ENCODE measurements at regions of chr21 and their contacts with region 1.

Region 1: DNA sequence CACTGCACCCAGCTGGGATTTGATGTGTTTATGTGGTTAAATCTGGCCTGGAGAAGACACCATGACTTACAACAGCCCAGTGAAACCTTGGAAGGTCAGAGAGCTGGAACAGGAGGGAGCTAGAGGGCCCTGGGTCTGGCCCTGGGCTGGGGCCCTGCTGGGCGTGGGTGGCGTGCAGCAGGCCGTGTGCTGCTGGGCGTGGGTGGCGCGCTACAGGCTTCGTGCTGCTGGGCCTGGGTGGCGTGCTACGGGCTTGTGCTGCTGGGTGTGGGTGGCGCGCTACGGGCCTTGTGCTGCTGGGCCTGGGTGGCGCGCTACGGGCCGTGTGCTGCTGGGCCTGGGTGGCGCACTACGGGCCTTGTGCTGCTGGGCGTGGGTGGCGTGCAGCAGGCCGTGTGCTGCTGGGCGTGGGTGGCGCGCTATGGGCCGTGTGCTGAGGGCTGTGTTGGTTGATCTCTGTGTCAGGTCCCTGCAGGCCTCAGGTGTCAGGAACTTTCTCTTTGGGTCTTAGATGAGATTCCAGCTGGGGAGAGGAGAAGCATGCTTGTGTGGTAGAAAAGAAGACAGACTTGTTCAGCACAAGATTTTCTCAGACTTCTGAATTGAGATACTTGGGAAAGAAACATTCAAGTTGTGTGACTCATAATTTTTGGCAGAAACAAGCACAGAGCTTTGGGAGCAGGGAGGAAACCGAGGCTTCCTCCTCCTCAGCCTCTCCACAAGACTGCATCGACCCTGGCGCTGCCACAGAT is 66.0 kb downstream of the COL18A1 start:
- DNase-seq: no peak
- ATAC-seq: no peak
- H3K4me3 ChIP-seq: peak overlapping the region in 2 of 3 experiments; percentile 34 to 63; a peak in 4 of 6 replicates
- H3K27ac ChIP-seq: peak overlapping the region; percentile 99
- H3K4me1 ChIP-seq: peaks cover 75% of the 10 kb centered on the region
- H3K27me3 ChIP-seq: no peaks in the 10 kb centered on the region
- CTCF ChIP-seq: no peak
- EP300 ChIP-seq: no peak
- POLR2A ChIP-seq: no peak
- RAD21 ChIP-seq: no peak

Region 2: GRCh38 chr21:45309069-45309986 is 161.6 kb before region 1 on chr21:
- CTCF ChIA-PET with region 1: no interaction called
- POLR2A ChIA-PET with region 1: interaction called, 18 read pairs
- in situ Hi-C with region 1: no loop called
- intact Hi-C with region 1: no loop called
- DNase-seq: peak; percentile 69
- ATAC-seq: peak; percentile 76
- H3K4me3 ChIP-seq: peak overlapping the region; percentile 60 to 78 (median 61)
- H3K27ac ChIP-seq: peak overlapping the region; percentile 91
- H3K4me1 ChIP-seq: peaks cover 39% of the 10 kb centered on the region
- H3K27me3 ChIP-seq: no peaks in the 10 kb centered on the region
- CTCF ChIP-seq: peak; percentile 75
- EP300 ChIP-seq: no peak
- POLR2A ChIP-seq: no peak
- RAD21 ChIP-seq: peak; percentile 76

Region 3: GRCh38 chr21:45404730-45405270 is 66.1 kb before region 1 on chr21 and contains the start of gene COL18A1:
- CTCF ChIA-PET with region 1: no interaction called
- POLR2A ChIA-PET with region 1: interaction called, 38 read pairs
- in situ Hi-C with region 1: no loop called
- intact Hi-C with region 1: no loop called
- DNase-seq: no peak
- ATAC-seq: peak; percentile 16
- H3K4me3 ChIP-seq: peak within 1 kb of the TSS; percentile 78 to 79 (median 79)
- H3K27ac ChIP-seq: peak within 1 kb of the TSS; percentile 80
- H3K4me1 ChIP-seq: peaks cover 47% of the 10 kb centered on the region
- H3K27me3 ChIP-seq: peaks cover 7 to 42% of the 10 kb centered on the region in 2 experiments
- CTCF ChIP-seq: no peak
- EP300 ChIP-seq: no peak
- POLR2A ChIP-seq: no peak; a peak in 1 of 4 replicates
- RAD21 ChIP-seq: no peak
- total RNA-seq, gene COL18A1: 21.2 and 102 TPM in 2 replicates

Region 4: GRCh38 chr21:45448810-45449657 is 21.9 kb before region 1 on chr21:
- CTCF ChIA-PET with region 1: no interaction called
- POLR2A ChIA-PET with region 1: interaction called, 41 read pairs
- in situ Hi-C with region 1: no loop called
- intact Hi-C with region 1: loop called (anchors 1 kb)
- DNase-seq: peak; percentile 94
- ATAC-seq: peak; percentile 84
- H3K4me3 ChIP-seq: peak overlapping the region in 2 of 3 experiments; percentile 21 to 49; a peak in 3 of 6 replicates
- H3K27ac ChIP-seq: peak overlapping the region; percentile 74
- H3K4me1 ChIP-seq: peaks cover 83% of the 10 kb centered on the region
- H3K27me3 ChIP-seq: no peaks in the 10 kb centered on the region
- CTCF ChIP-seq: no peak; the same call in 1 of the 2 replicates
- EP300 ChIP-seq: 0 out of 4 replicates have a peak, but pooled peaks of 1 of the 2 experiments have one; percentile 39
- POLR2A ChIP-seq: no peak
- RAD21 ChIP-seq: peak; percentile 22; the same call in 1 of the 2 replicates

Region 5: DNA sequence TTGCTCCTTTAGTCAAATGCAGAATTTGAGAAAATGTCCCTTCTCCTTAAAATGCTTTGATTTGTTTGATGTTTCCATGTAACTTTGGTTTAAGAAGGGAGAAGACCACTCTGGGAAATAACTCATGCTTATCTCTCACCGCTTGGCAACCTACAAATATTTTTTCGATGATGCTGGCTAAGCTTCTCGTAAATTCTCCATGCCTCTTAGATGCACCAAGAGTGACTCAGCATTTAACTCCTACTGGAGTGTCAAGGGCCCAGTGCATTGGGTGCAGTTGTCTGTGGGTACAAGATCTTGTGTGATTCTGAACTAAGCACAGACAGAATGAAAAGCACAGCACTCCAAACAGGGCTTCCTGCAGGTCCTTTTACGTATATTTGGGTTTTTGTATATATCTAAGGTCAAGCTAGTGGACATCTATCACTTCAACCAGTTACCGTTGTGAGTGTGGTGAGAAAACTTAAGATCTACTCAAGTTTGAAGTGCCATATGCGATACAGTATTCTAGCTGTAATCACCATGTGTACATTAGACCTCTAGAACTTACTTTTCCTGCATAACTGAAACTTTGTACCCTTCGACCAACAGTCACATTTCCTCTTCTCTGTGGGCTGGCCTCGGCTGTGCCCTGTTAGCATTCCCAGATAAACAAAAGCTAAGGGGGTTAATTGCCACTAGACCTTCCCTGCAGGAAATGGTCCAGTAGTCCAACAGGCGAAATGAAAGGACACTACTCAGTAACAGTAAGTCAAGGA is 10.2 kb before region 1 on chr21:
- CTCF ChIA-PET with region 1: no interaction called
- POLR2A ChIA-PET with region 1: interaction called, 33 read pairs
- in situ Hi-C with region 1: no loop called
- intact Hi-C with region 1: no loop called
- DNase-seq: peak; percentile 55
- ATAC-seq: no peak
- H3K4me3 ChIP-seq: no peak overlapping the region
- H3K27ac ChIP-seq: peak overlapping the region; percentile 64
- H3K4me1 ChIP-seq: peaks cover 58% of the 10 kb centered on the region
- H3K27me3 ChIP-seq: no peaks in the 10 kb centered on the region
- CTCF ChIP-seq: no peak
- EP300 ChIP-seq: no peak
- POLR2A ChIP-seq: no peak
- RAD21 ChIP-seq: no peak

Region 6: GRCh38 chr21:45525153-45526025 is 54.4 kb after region 1 on chr21:
- CTCF ChIA-PET with region 1: no interaction called
- POLR2A ChIA-PET with region 1: interaction called, 65 read pairs
- in situ Hi-C with region 1: no loop called
- intact Hi-C with region 1: no loop called
- DNase-seq: peak; percentile 92
- ATAC-seq: peak; percentile 92
- H3K4me3 ChIP-seq: peak overlapping the region in 1 of 3 experiments; percentile 42; a peak in 3 of 6 replicates
- H3K27ac ChIP-seq: peak overlapping the region; percentile 86
- H3K4me1 ChIP-seq: peaks cover 54% of the 10 kb centered on the region
- H3K27me3 ChIP-seq: no peaks in the 10 kb centered on the region
- CTCF ChIP-seq: peak; percentile 24
- EP300 ChIP-seq: peak in 1 of 2 experiments; percentile 53; a peak in 1 of 4 replicates
- POLR2A ChIP-seq: peak in 1 of 2 experiments; percentile 68; a peak in 2 of 4 replicates
- RAD21 ChIP-seq: no peak

Measured in HepG2 (cell line).